ENCODE measurements at regions of chr17 and their contacts with region 1.

Region 1: DNA sequence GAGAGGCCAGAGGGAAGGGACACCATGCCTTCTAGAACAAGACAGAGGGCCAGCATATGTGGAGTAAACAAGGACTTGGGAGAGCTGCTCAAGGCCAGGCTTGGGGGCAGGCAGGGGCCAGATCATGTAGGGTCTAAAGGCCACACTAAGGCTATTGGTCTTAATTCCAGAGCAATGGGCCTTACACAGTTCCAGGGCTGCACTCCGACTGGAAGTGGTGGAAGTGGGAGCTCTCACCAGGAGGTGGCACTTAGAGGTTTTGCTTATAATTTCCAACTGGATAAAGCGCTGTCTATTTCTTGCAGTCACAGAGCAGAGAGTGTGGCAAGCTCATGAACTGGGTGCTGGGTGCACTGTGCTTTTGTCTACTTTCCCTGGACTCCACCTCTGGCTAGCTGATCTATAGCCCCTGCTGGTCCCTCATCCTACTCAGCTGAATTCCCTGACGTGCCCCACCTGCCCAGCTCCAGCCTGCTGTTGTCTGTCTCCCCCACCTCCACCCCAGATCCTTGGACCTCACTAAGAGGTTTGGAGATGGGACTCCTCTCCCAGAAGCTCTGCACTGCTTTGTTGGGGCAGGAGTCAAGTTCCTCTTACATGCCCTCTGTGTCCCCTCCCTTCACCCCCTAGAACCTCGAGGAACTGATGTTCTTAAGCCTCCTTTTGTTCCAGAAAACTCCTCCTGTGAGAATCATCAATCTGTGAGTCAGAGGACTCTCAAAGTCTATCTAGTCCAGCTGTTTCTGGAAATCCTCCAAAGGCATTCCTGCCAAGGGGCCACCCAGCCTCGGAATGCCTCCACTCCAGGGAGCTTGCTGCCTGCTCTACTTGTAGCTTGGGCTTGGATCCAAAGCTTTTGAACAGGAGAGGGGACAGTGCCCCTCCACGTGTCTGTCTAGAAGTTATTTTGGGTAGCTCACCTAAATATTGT is 48.1 kb upstream of the KSR1 start:
- DNase-seq: peak; percentile 19

Region 2: DNA sequence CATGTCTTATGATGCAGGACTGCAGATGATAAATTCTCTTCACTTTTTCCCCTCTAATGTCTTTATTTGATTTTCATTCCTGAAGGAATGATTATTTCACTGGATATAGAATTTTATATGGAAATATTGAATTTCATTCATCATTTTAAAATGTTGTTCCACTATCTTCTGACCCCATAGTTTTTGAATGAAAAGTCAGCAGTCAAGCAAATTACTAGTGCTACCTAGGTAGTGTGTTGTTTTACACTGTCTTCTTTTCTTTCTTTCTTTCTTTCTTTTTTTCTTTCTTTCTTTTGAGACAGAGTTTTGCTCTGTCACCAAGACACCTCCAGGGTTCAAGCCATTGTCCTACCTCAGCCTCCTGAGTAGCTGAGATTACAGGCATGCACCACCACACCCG is 37.4 kb before region 1 on chr17:
- intact Hi-C with region 1: loop called in 1 of 2 experiments (anchors 1 kb)
- DNase-seq: no peak

Region 3: DNA sequence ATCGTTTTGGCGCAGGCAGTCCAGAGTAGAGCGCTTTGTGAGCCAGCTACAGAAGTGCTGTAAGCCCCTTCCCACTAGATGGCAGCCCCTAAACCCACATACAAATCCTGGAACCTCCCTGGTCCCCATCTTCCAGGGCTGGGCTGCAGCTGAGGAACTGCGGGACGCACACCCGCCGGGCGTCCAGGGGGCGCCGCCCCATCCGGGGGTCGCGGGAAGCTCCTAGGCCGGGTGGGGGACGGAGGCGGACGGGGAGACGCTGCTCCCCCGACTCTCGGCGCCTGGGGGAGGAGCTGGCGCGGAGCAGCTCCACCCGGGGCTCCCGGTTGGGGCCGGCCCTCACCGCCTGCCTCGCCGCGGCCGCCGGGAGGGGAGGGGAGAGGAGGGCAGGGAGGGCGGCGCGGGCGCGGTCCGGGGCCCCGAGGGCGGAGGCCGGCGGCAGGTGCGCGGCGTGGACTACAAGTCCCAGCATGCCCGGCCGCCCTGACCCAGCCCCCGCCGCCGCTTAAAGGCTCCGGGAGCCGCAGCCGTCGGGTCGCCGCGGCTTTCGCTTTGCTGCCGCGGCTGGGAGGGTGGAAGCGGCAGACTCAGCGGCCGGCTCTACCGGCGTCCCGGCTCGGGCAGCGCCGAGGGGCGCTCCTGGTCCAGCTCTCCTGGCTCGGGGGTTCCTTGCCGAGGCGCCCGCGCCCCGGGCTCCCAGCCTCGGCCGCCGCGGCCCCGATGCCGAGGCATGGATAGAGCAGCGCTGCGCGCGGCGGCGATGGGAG is 47.9 kb after region 1 on chr17 and contains the start of gene KSR1:
- intact Hi-C with region 1: loop called in 1 of 2 experiments (anchors 10 kb)
- DNase-seq: peak; percentile 93
- total RNA-seq, gene KSR1: 30.3 to 35.5 TPM

Region 4: DNA sequence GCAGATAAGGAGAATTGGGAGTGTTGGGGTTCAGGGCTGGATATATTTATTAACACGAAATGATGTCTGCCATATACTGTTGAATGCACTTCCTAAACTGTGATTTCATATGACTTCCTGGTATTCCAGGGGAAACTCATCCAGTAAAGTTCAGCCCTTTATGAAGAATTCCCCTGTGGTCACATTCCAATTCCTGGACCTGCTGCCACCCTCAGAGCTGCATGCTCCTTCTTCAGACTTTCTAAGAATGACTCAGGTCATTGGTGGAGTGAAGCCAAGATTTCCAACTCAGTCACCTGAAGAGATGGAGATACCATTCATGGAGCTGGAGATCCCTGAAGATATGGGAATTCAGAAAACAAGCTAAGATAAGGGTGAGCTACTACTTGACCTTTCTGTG is 796.6 kb after region 1 on chr17:
- intact Hi-C with region 1: loop called in 1 of 2 experiments (anchors 5 kb)
- DNase-seq: no peak